Calu3 (cell line): ENCODE measurements at regions of chr3 and their contacts with region 1.

Region 1: GRCh38 chr3:69671082-69671952 is 67.9 kb upstream of the MITF start:
- DNase-seq: peak; percentile 46
- H3K4me3 Mint-ChIP-seq: no peak overlapping the region
- H3K27ac Mint-ChIP-seq: no peak overlapping the region
- H3K4me1 Mint-ChIP-seq: peaks cover 24% of the 10 kb centered on the region
- H3K27me3 Mint-ChIP-seq: no peaks in the 10 kb centered on the region
- CTCF ChIP-seq: peak; percentile 44

Region 2: GRCh38 chr3:69120879-69121464 is 550.3 kb before region 1 on chr3:
- CTCF ChIA-PET with region 1: no interaction called
- intact Hi-C with region 1: loop called (anchors 5 kb)
- DNase-seq: peak; percentile 85
- H3K4me3 Mint-ChIP-seq: no peak overlapping the region
- H3K27ac Mint-ChIP-seq: no peak overlapping the region
- H3K4me1 Mint-ChIP-seq: peaks cover 29% of the 10 kb centered on the region
- H3K27me3 Mint-ChIP-seq: no peaks in the 10 kb centered on the region
- CTCF ChIP-seq: peak; percentile 60

Region 3: GRCh38 chr3:69428657-69429255 is 242.6 kb before region 1 on chr3:
- CTCF ChIA-PET with region 1: no interaction called
- intact Hi-C with region 1: no loop called
- DNase-seq: no peak
- H3K4me3 Mint-ChIP-seq: no peak overlapping the region
- H3K27ac Mint-ChIP-seq: no peak overlapping the region
- H3K4me1 Mint-ChIP-seq: peaks cover 9% of the 10 kb centered on the region
- H3K27me3 Mint-ChIP-seq: no peaks in the 10 kb centered on the region
- CTCF ChIP-seq: no peak

Region 4: DNA sequence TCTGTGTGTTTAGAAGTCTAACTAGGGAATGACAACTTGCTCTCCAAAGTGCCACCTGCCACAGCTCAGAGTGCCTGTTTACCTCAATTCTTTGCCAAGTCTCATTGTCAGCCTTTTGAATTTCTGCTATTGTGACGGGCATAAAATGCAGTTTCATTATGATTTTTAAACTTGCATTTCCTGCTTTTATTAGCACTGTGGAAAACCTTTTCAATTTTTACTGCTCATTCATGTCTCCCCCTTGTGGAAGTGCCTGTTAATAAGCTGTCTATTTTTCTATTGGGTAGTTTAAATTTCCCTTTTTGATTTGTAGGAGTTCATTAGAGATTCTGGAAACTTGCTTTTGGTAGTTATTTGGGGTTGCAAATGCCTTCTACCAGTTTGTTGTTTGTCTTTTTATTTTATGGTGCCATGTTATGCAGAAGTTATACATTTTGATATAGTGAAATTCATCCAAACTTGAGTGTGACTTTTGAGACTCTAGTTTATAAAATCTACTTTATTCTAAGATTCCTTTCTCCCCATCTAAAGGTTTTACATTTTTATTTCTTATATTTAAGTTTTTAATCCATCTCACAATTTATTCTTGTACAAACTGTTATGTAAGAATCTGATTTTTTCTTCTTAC is 231.6 kb before region 1 on chr3:
- CTCF ChIA-PET with region 1: no interaction called
- intact Hi-C with region 1: loop called (anchors 2 kb)
- DNase-seq: peak; percentile 12
- H3K4me3 Mint-ChIP-seq: peak overlapping the region; percentile 25
- H3K27ac Mint-ChIP-seq: peak overlapping the region; percentile 36
- H3K4me1 Mint-ChIP-seq: no peaks in the 10 kb centered on the region
- H3K27me3 Mint-ChIP-seq: no peaks in the 10 kb centered on the region
- CTCF ChIP-seq: peak; percentile 26

Region 5: DNA sequence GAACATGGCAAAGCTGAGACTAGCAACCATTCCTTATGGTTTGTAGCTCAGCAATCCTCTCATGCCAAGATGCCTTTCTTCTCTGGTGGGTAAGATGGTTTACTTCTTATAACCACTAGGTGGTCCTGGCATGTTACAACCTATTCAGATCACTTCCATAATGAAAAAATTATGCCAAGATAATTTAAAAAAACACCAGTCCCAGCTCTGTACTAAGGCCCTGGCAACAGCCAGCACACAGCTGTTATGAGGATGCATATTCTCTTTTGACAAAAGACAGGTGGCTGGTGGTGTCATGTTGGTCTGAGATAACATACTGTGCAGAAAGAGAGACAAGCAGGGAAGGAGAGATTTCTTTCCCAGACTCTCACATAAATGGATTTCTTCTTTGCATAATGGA is 219.7 kb before region 1 on chr3:
- CTCF ChIA-PET with region 1: no interaction called
- intact Hi-C with region 1: loop called (anchors 1 kb)
- DNase-seq: no peak
- H3K4me3 Mint-ChIP-seq: no peak overlapping the region
- H3K27ac Mint-ChIP-seq: no peak overlapping the region
- H3K4me1 Mint-ChIP-seq: no peaks in the 10 kb centered on the region
- H3K27me3 Mint-ChIP-seq: no peaks in the 10 kb centered on the region
- CTCF ChIP-seq: no peak